PC-9 (cell line): ENCODE measurements at regions of chr16 and their contacts with region 1.

Region 1: DNA sequence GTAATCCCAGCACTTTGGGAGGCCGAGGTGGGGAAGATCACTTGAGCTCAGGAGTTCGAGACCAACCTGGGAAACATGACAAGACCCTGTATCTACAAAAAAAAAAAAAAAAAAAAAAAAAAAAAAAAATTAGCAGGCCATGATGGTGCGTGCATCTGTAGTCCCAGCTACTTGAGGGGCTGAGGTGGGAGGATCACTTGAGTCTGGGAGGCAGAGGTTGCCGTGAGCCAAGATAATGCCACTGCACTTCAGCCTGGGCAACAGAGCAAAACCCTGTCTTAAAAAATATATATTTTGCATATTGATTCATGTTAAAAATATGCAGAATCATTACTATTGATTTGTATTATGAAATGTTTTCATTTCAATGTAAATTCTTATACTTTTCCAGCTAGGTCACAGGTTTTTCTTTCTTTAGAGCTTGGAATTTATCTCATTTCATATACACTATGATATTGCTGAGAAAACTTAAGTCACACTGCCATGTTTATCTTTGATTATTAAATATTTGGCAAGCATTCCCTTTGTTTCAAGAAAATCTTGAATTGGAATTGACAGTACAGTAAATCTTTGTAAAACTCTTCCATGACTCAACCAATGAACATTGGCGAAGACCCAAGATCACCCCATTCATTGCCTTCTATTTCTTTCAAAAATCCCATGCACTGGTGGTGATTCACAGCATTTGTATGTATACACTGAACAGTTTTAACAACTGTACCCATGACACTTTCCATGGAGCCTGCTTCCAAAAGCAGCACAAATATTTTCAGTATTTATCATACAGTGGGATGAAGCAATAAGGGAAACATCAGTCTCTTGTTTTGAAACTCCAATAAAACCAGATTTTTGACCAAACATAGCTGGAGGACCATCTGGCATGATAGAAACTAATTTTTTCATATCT is 83.5 kb upstream of the TNRC6A start:
- DNase-seq: peak; percentile 81 to 99
- H3K4me3 ChIP-seq: no peak overlapping the region
- H3K27ac ChIP-seq: peak overlapping the region; percentile 93
- H3K4me1 ChIP-seq: peaks cover 36% of the 10 kb centered on the region
- H3K27me3 ChIP-seq: no peaks in the 10 kb centered on the region
- CTCF ChIP-seq: no peak

Region 2: DNA sequence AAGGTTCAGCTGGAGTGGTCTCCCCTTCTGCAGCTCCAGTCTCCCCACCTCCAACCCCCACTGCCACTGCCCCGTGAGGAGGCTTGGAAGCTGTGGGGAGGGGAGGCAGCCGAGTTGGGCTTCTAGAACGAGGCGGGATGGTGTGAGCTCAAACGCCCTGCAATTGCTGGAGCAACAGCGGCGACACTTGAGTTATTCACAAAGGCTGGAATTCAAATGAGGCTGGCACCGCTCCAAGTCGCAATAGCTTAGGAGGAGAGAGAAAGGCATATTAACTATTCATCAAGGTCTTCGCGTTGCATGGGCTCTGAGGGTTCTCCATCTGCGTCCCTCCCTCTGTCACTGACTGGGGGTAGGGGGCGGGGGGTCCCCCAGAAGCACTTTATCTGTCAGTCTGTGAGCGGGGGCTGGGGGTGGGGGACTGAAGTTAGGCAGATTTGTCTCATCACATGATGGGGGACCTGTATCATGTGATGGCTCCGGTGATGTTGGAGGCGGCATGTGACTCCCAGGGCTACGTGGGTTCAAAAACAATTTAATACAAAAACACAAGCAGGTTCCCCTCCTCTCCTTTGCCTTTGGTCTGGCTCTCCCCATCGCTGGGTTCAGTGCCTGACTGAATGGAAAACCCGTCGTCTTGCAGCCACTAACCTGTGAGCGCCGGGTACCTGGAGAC is 36.1 kb before region 1 on chr16:
- CTCF ChIA-PET with region 1: no interaction called
- POLR2A ChIA-PET with region 1: no interaction called
- intact Hi-C with region 1: no loop called
- DNase-seq: peak in 1 of 2 experiments; percentile 19
- H3K4me3 ChIP-seq: no peak overlapping the region
- H3K27ac ChIP-seq: no peak overlapping the region
- H3K4me1 ChIP-seq: no peaks in the 10 kb centered on the region
- H3K27me3 ChIP-seq: 0 out of 2 replicates have a peak, but pooled peaks cover 5% of the 10 kb centered on the region
- CTCF ChIP-seq: no peak

Region 3: DNA sequence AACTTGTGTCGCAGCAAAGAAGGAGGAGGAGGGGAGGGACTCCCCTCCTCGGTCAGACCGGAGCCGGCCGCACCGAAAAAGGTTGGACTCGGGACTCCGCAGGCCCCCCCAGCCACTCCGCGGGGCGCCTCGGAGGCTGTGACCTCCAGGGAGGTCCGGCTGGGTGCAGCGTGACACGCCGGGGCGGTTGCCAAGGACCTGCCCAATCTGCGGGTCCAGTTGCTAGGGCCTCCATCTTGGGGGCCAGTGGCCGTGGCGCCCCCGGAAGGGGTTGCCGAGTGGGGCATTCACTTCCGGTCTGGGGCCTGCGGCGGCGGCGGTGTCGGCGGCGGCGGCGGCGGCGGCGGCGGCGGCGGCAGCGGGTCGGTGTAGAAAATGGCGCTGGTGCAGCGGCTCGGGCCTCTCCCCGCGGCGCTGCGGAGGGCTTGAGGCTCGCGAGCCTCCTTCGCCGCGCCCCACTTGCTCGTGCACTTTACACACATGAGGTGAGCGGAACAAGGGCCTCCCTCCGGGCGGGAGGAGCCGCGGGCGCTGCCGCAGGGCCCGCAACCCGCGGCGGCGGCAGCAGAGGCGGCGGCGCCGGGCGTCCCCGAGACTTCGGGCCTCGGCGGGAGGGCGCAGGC is 83.5 kb after region 1 on chr16 and contains the start of gene TNRC6A:
- CTCF ChIA-PET with region 1: interaction called, 6 read pairs
- POLR2A ChIA-PET with region 1: no interaction called
- intact Hi-C with region 1: loop called (anchors 1 kb)
- DNase-seq: peak; percentile 77 to 94
- H3K4me3 ChIP-seq: peak within 1 kb of the TSS; percentile 83
- H3K27ac ChIP-seq: peak within 1 kb of the TSS; percentile 69
- H3K4me1 ChIP-seq: peaks cover 33% of the 10 kb centered on the region
- H3K27me3 ChIP-seq: no peaks in the 10 kb centered on the region
- CTCF ChIP-seq: no peak
- total RNA-seq, gene TNRC6A: 66.8 and 84.8 TPM in 2 replicates